ENCODE measurements at regions of chr16 and their contacts with region 1.

Region 1: DNA sequence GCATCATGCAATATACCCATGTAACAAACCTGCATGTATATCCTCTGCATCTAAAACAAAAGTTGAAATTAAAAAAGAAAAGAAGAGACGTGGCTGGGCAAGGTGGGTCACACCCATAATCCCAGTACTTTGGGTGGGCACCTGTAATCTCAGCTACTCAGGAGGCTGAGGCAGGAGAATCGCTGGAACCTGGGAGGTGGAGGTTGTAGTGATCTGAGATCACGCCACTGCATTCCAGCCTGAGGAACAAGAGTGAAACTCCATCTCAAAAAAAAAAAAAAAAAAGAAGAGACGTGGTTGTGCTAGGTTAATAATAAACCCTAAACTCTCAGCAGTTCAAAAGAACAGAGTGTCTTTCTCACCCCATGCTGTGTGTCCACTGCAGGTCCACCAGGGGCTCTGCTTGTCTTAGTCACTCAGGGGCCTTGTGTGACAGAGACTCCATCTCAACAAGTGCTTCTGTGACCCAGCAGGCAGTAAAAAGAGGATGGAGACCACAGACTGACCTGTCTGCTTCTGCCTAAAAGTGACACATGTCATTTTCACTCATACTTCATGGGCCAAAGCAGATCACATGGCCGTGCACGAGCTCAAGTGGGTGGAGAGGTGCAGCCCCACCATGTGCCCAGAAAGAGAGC is 22.3 kb upstream of the N4BP1 start:
- DNase-seq: no peak
- ATAC-seq: no peak
- H3K4me3 Mint-ChIP-seq: no peak overlapping the region
- H3K27ac Mint-ChIP-seq: no peak overlapping the region
- H3K4me1 Mint-ChIP-seq: peaks cover 10% of the 10 kb centered on the region
- H3K27me3 Mint-ChIP-seq: no peaks in the 10 kb centered on the region
- CTCF ChIP-seq: no peak

Region 2: GRCh38 chr16:48321317-48322036 is 310.8 kb before region 1 on chr16:
- CTCF ChIA-PET with region 1: interaction called, 10 read pairs
- POLR2A ChIA-PET with region 1: no interaction called
- intact Hi-C with region 1: no loop called
- DNase-seq: peak; percentile 64
- ATAC-seq: peak; percentile 61
- H3K4me3 Mint-ChIP-seq: no peak overlapping the region
- H3K27ac Mint-ChIP-seq: no peak overlapping the region
- H3K4me1 Mint-ChIP-seq: peaks cover 46% of the 10 kb centered on the region
- H3K27me3 Mint-ChIP-seq: no peaks in the 10 kb centered on the region
- CTCF ChIP-seq: no peak

Region 3: DNA sequence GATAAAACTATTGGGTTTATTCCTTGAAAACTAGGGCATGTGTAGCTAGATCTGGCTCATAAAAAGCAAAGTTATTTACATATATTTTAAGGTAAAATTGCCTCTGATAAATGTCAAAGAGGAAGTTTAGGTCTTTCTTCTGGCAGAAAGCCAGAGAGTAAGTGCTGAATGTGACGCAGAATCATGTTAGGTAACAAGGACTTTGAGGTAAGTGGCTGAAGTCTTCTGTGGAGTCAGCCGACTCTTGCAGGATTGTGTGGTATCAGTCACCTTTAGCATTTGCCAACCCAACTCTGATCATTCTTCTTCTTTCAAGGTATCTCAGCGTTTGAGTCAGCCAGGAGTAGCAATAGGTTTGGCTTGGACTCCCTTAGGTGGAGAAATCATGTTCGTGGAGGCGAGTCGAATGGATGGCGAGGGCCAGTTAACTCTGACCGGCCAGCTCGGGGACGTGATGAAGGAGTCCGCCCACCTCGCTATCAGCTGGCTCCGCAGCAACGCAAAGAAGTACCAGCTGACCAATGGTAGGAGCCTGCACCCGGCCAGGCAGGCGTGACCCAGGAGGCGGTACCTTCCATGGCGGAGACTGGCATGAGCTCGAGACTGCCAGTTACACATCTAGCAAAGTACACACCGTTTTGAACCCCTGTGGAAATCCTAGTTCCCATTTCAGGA is 284.9 kb before region 1 on chr16:
- CTCF ChIA-PET with region 1: interaction called, 24 read pairs
- POLR2A ChIA-PET with region 1: no interaction called
- intact Hi-C with region 1: no loop called
- DNase-seq: no peak
- ATAC-seq: no peak
- H3K4me3 Mint-ChIP-seq: no peak overlapping the region
- H3K27ac Mint-ChIP-seq: no peak overlapping the region
- H3K4me1 Mint-ChIP-seq: peaks cover 10% of the 10 kb centered on the region
- H3K27me3 Mint-ChIP-seq: no peaks in the 10 kb centered on the region
- CTCF ChIP-seq: no peak

Region 4: DNA sequence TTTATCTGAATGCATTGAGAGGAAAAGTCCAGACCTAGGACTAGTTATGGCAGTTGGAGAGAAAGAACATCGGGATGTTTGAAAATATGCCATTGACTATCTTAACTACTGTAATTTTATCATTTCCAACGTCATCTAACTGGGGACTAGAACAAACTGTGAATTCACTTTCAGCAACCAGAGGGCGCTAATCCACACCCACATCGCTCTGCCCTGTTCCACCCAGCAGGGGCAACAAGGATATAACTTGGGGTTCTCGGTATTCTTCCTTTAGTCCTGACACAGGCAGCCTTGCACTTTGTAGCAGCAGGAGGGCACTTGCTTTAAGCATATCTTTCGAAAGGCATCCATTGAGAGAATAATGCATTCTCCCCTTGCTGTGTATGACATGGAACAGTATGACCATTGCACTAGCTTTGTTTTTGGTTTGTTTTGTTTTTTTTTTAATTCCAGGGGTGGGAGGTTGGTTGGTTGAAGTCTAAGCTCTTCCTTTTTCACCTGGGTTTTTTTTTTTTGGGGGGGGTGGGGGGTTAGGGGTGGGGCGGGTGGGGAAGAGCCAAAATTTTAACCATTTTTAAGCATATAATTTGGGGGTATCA is 278.6 kb before region 1 on chr16:
- CTCF ChIA-PET with region 1: interaction called, 26 read pairs
- POLR2A ChIA-PET with region 1: interaction called, 3 read pairs
- intact Hi-C with region 1: loop called (anchors 1 kb)
- DNase-seq: peak; percentile 76
- ATAC-seq: peak; percentile 81
- H3K4me3 Mint-ChIP-seq: peak overlapping the region; percentile 21
- H3K27ac Mint-ChIP-seq: peak overlapping the region; percentile 73
- H3K4me1 Mint-ChIP-seq: peaks cover 18% of the 10 kb centered on the region
- H3K27me3 Mint-ChIP-seq: no peaks in the 10 kb centered on the region
- CTCF ChIP-seq: peak; percentile 92

Region 5: GRCh38 chr16:48365581-48366164 is 266.6 kb before region 1 on chr16:
- CTCF ChIA-PET with region 1: interaction called, 14 read pairs
- POLR2A ChIA-PET with region 1: no interaction called
- intact Hi-C with region 1: no loop called
- DNase-seq: peak; percentile 88
- ATAC-seq: peak; percentile 97
- H3K4me3 Mint-ChIP-seq: peak overlapping the region; percentile 98
- H3K27ac Mint-ChIP-seq: peak overlapping the region; percentile 99
- H3K4me1 Mint-ChIP-seq: peaks cover 52% of the 10 kb centered on the region
- H3K27me3 Mint-ChIP-seq: no peaks in the 10 kb centered on the region
- CTCF ChIP-seq: no peak

Measured in activated CD8-positive, alpha-beta T cell treated with anti-CD3 and anti-CD28 coated beads for 36 hours (primary cell).